Mammary epithelial cell (primary cell): ENCODE measurements at regions of chr2 and their contacts with region 1.

Region 1: DNA sequence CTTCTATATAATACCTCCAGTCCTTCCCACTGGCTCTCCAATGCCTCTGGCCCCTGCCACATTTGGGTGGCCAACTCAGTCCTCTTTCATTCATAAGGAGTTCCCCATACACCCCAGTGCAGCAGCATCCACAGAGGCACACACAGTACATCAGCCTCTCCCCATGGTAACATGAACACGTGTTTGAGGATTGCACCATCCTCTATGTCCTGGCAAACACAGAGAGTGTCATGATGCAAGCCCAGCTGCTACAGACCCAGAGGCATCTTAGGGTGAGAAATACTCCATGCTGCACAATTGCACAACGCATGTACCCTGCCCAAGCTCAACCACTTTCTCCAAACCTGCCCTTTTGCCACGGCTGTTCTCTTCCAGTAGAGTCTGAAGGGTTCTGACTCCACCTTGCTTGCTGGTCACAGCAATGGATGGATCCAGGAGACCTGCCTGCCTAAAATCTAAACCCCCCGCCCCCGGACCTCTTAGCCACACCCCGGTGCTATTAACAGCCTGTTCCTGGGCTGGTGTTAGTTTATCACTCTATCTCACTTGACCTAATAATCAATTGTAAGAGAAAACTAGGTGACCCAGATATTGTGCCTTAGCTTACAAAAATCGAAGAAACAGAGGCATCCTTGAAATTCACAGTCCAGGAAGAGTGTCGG is 11.4 kb downstream of the IGFBP5 start:
- DNase-seq: peak; percentile 95
- H3K4me3 ChIP-seq: no peak overlapping the region
- H3K27ac ChIP-seq: peak overlapping the region; percentile 38
- H3K4me1 ChIP-seq: peaks cover 31% of the 10 kb centered on the region
- H3K27me3 ChIP-seq: no peaks in the 10 kb centered on the region
- CTCF ChIP-seq: no peak

Region 2: GRCh38 chr2:216436383-216436782 is 247.6 kb before region 1 on chr2:
- CTCF ChIA-PET with region 1: no interaction called
- dilution Hi-C with region 1: no loop called
- in situ Hi-C with region 1: no loop called
- intact Hi-C with region 1: no loop called
- DNase-seq: no peak
- H3K4me3 ChIP-seq: no peak overlapping the region
- H3K27ac ChIP-seq: no peak overlapping the region
- H3K4me1 ChIP-seq: no peaks in the 10 kb centered on the region
- H3K27me3 ChIP-seq: no peaks in the 10 kb centered on the region
- CTCF ChIP-seq: no peak

Region 3: DNA sequence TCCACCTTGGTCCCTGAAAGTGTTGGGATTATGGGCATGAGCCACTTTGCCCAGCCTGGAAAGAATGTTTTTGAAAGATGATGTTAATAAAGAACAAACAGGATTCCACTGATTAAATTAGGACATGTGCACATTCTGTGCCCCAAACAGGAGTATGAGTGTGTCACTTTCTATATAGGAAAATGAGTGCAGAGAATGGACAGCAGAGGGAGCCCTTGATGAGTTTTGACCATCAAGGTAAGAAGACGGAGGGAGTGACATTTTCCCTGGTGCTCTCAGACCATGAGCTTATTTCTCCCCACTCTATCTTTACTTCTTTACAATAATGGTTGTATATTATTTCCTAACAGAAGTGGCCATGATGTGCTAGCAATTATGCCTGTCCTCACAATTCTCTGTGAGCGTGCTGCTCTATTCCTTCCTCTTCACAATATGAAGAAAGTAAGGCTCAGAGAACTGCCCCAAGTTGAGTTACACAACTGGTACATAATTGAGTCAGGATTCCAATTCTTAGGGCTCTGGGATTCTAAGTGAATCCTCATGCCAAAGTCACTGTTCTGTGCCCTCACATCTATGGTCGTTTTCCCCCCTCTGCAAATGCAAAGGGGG is 164.7 kb before region 1 on chr2:
- CTCF ChIA-PET with region 1: interaction called, 5 read pairs
- dilution Hi-C with region 1: loop called (anchors 5 kb)
- in situ Hi-C with region 1: no loop called
- intact Hi-C with region 1: loop called (anchors 5 kb)
- DNase-seq: peak; percentile 70
- H3K4me3 ChIP-seq: no peak overlapping the region
- H3K27ac ChIP-seq: no peak overlapping the region
- H3K4me1 ChIP-seq: peaks cover 15% of the 10 kb centered on the region
- H3K27me3 ChIP-seq: no peaks in the 10 kb centered on the region
- CTCF ChIP-seq: peak; percentile 72 to 78

Region 4: GRCh38 chr2:216633616-216634369 is 50.2 kb before region 1 on chr2:
- CTCF ChIA-PET with region 1: no interaction called
- dilution Hi-C with region 1: no loop called
- in situ Hi-C with region 1: no loop called
- intact Hi-C with region 1: loop called (anchors 1 kb)
- DNase-seq: peak; percentile 42
- H3K4me3 ChIP-seq: peak overlapping the region; percentile 71 to 93 (median 77)
- H3K27ac ChIP-seq: peak overlapping the region; percentile 61
- H3K4me1 ChIP-seq: peaks cover 21% of the 10 kb centered on the region
- H3K27me3 ChIP-seq: no peaks in the 10 kb centered on the region
- CTCF ChIP-seq: no peak

Region 5: DNA sequence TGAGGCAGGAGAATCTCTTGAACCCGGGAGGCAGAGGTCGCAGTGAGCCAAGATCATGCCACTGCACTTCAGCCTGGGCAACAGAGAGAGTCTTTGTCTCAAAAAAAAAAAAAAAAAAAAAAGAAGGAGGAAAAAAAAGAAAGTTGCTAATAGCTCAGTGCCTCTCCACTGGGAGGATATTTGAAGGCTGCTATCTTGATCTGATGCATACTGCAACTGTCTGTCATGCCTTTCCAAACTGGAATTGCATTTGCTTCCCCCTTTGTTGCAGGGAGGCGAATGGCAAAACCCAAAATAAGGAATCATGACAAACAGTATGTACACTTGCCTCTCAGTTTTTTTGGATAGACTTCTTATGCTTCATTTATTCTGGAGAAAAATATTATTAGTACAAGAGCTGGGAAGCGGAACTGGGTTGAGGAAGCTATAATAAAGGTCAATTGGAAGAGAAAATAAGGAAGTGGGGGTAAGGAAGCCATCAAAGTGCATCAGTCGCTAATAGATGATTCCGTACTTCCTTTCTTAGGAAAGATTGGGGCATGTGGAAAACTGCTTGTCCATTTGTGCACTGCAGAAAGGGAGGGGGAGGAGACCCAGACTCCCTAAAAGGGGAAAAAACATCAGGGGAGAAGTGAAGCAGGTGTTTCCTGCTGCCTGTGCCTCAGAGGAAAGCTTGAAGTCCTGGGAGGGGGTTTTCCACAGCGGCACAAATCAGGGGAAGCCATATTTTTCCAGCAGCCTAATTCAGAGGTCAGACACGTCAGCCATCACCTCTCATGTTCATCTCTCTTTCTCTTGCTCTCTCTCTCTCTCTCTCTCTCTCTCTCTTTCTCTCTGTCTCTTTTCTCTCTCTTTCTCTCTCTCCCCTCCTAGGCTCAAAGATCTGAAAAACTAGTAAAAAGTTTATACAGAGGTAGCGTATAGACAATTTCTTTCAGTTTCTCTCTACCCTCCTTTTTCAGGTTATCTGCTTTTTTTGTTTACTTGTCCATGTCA is 477.3 kb after region 1 on chr2:
- CTCF ChIA-PET with region 1: interaction called, 13 read pairs
- dilution Hi-C with region 1: no loop called
- in situ Hi-C with region 1: no loop called
- intact Hi-C with region 1: loop called (anchors 1 kb)
- DNase-seq: peak; percentile 23
- H3K4me3 ChIP-seq: no peak overlapping the region
- H3K27ac ChIP-seq: no peak overlapping the region
- H3K4me1 ChIP-seq: peaks cover 17% of the 10 kb centered on the region
- H3K27me3 ChIP-seq: no peaks in the 10 kb centered on the region
- CTCF ChIP-seq: no peak

Region 6: DNA sequence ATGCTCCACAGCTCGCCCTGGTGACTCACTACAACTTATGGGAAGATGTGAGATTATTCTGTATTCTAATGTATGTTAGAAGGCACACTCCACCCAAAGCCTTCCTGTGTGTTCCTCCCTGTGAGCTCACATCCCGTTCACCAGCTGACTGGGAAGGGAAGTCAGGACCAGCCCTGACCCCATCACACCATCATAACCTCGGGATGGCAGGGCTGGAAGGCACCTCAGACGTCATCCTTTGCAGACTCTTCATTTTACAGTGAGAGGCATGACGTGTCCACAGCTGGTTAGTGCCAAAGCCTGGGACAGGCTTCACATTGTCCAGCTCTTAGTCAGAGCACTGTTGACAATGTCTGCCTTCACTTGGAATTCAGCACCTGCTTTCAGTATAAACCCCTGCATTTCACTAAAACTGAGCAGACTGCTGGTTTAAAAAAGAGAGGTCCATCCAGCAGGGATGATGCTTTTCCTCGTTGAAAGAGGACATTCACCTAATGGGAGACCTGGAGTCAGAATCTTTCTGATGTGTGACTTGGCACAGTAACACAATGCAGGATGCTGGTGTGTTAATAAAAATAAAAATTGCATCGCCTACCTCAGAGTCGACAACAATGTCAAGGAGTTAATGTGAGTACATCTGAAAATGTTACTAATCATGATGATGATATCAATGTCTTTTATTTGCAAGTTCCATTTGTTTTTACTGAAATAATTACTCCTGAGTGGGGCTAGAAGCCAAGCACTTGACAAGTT is 593.8 kb after region 1 on chr2:
- CTCF ChIA-PET with region 1: no interaction called
- dilution Hi-C with region 1: no loop called
- in situ Hi-C with region 1: no loop called
- intact Hi-C with region 1: loop called (anchors 5 kb)
- DNase-seq: peak; percentile 92
- H3K4me3 ChIP-seq: no peak overlapping the region
- H3K27ac ChIP-seq: no peak overlapping the region
- H3K4me1 ChIP-seq: peaks cover 31% of the 10 kb centered on the region
- H3K27me3 ChIP-seq: no peaks in the 10 kb centered on the region
- CTCF ChIP-seq: no peak

Region 7: GRCh38 chr2:217393585-217394032 is 709.6 kb after region 1 on chr2:
- CTCF ChIA-PET with region 1: no interaction called
- dilution Hi-C with region 1: no loop called
- in situ Hi-C with region 1: no loop called
- intact Hi-C with region 1: loop called (anchors 5 kb)
- DNase-seq: peak; percentile 91
- H3K4me3 ChIP-seq: peak overlapping the region; percentile 27 to 42 (median 36)
- H3K27ac ChIP-seq: peak overlapping the region; percentile 73
- H3K4me1 ChIP-seq: peaks cover 21% of the 10 kb centered on the region
- H3K27me3 ChIP-seq: no peaks in the 10 kb centered on the region
- CTCF ChIP-seq: no peak

Region 8: DNA sequence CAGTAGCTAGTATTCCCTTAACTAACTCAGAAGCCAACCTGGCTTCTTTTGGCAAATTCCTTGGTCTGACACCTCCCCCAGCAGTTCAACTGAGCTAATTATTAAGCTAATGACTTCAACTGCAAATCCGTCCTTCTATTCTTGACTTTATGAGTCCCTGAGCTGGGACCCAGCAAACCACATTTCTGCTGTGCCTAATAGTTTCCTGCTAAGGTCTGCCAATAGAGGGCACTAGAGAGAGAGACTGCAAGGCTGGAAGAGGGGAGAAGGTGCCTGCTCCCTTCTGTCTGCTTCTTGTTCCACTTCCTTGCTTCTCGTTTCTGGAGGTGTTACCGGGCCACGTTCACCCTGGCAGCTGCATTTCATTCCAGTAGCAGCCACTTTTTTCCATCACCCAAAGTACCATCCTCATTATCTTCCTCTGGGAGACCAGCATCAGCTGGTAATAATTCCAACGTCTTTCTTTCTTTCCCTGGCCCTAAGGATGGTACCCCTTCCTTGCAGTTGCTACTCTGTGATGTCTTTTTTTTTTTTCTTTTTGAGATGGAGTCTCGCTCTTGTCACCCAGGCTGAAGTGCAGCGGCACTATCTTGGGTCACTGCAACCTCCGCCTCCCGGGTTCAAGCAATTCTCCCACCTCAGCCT is 966.9 kb after region 1 on chr2:
- CTCF ChIA-PET with region 1: interaction called, 4 read pairs
- dilution Hi-C with region 1: no loop called
- in situ Hi-C with region 1: no loop called
- intact Hi-C with region 1: loop called (anchors 5 kb)
- DNase-seq: peak; percentile 63
- H3K4me3 ChIP-seq: no peak overlapping the region
- H3K27ac ChIP-seq: no peak overlapping the region
- H3K4me1 ChIP-seq: peaks cover 12% of the 10 kb centered on the region
- H3K27me3 ChIP-seq: no peaks in the 10 kb centered on the region
- CTCF ChIP-seq: peak; percentile 92